GM18951 (cell line): ENCODE measurements at regions of chr3 and their contacts with region 1.

Region 1: DNA sequence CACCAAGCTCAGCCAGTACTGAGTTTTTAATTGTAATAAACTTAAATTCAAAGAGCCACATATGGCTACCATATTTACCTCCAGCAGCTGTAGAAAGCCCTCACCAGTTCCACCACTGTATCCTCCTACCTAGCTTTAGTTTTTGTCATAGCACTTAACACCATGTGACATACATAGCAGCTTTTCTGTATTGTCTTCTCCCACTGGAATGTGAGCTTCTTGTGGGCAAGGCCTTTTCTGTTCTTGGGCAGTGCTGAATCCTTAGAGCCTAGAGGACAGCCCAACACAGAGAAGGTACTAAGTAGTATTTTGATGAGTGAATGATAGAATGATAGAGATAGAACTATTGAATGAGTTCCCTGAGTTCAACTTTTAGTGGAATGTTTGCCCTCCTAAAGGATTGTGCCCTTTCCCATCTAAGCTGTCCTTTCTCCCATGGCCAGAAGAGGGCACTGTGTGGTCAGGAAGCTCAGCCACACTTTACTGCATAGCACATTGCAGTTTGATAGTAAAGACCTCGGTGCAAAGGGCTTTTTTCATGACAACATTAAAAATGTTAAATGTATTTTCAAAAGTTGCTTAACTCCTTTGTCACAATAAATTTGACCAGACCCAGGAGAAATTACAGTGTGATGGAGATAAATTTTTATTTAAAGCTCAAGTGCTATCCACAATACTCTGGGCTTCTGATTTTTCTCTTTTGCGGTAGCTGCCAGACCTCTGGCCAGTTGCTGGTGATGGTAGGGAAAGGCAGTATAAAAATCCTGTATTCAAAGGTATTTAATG is 115.8 kb downstream of the GHSR start:
- POLR2A ChIP-seq: no peak

Region 2: GRCh38 chr3:172666873-172667694 is 334.6 kb after region 1 on chr3:
- in situ Hi-C with region 1: loop called (anchors 10 kb)
- POLR2A ChIP-seq: no peak

Region 3: DNA sequence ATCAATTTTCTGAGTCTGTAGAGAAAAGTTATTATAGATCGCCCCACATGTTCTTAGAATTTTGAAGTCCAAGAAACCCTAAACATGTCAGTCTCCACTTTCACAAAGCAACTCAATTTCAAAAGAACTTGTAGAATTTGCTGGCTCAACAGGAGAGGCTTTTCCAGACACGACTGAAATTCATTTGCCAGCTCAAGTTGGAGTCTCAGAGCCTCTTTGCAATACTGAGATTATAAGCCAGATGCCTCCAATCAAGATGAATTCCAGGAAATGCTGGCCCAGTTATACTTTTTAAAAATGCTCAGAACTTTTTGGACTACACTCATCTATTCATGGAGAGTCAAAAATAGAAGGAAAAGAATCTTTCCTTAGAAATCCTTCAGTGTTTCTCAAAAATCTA is 1008.2 kb after region 1 on chr3:
- in situ Hi-C with region 1: no loop called
- POLR2A ChIP-seq: no peak